MCF 10A (cell line): ENCODE measurements at regions of chr9 and their contacts with region 1.

Region 1: DNA sequence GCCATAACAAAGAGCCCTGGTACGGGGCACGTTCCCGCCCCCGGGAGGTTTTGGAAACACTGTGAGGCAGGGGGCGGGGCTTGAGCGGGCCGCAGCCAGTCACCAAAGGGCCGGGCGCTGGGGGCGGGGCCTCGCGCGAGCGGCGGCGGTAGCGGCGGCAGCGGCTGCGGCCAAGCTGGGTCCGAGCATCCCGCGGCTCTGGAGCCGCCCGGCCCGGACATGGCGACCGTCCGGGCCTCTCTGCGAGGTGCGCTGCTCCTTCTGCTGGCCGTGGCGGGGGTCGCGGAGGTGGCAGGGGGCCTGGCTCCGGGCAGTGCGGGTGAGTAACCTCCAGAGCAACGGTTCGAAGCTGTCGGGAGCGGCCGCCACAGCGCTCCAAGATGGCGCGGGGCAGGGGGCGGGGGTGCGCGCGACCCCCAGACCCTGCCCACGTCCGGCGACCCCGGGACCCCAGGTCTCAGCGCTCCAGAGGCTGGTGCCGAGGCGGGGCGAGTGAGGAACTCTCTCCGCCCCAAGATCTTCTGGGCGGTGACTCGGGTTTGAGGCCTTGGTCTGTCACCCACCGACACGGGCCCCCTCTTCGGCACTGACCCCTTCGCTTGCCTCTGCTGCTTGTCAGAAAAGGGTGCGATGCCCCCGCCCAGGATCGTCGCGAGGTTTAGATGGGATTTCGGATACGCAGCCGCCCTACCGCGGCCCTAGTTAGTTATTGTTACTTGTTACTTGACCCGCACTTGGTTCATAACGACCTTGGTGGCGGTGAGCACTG is at the start of gene RECK:
- DNase-seq: peak; percentile 85
- H3K4me3 Mint-ChIP-seq: peak within 1 kb of the TSS; percentile 76
- H3K27ac Mint-ChIP-seq: peak within 1 kb of the TSS; percentile 50
- H3K4me1 Mint-ChIP-seq: peaks cover 25% of the 10 kb centered on the region
- H3K27me3 Mint-ChIP-seq: peaks cover 12% of the 10 kb centered on the region
- CTCF ChIP-seq: no peak
- total RNA-seq, gene RECK: 3.3 and 3.7 TPM in 2 replicates

Region 2: GRCh38 chr9:36056896-36057295 is 19.9 kb after region 1 on chr9:
- CTCF ChIA-PET with region 1: no interaction called
- POLR2A ChIA-PET with region 1: interaction called, 11 read pairs
- intact Hi-C with region 1: no loop called
- DNase-seq: peak; percentile 56
- H3K4me3 Mint-ChIP-seq: no peak overlapping the region
- H3K27ac Mint-ChIP-seq: no peak overlapping the region
- H3K4me1 Mint-ChIP-seq: no peaks in the 10 kb centered on the region
- H3K27me3 Mint-ChIP-seq: no peaks in the 10 kb centered on the region
- CTCF ChIP-seq: no peak